H1 (cell line): ENCODE measurements at regions of chr15 and their contacts with region 1.

Region 1: DNA sequence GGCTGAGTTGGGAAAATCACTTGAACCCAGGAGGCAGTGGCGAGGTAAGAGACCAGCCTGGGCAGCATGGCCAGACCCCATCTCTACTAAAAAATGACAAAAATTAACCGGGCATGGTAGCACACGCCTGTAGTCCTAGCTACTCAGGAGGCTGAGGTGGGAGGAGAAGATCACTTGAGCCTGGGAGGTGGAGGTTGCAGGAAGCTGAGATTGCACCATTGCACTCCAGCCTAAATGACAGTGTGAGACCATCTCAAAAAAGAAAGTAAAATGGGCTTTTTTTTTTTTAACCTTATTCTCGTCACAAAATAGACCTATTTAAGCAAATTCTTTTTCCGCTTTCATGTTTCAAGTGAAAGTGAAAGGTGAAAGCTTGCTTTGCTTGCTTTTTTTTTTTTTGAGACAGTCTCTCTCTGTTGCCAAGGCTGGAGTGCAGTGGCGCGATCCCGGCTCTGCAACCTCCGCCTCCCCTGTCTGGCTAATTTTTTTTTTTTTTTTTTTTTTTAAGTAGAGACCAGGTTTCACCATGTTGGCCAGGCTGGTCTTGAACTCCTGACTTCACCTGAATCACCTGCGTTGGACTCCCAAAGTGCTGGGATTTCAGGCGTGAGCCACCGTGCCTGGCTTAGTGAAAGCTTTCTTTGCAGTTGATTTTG is 3.6 kb downstream of the PDIA3 start:
- DNase-seq: no peak
- H3K4me3 ChIP-seq: no peak overlapping the region
- H3K27ac ChIP-seq: no peak overlapping the region
- H3K4me1 ChIP-seq: peaks cover 0 to 6% (median 2%) of the 10 kb centered on the region in 4 experiments; a peak in 6 of 7 replicates
- H3K27me3 ChIP-seq: no peaks in the 10 kb centered on the region
- CTCF ChIP-seq: no peak
- EP300 ChIP-seq: no peak
- POLR2A ChIP-seq: no peak
- RAD21 ChIP-seq: no peak

Region 2: DNA sequence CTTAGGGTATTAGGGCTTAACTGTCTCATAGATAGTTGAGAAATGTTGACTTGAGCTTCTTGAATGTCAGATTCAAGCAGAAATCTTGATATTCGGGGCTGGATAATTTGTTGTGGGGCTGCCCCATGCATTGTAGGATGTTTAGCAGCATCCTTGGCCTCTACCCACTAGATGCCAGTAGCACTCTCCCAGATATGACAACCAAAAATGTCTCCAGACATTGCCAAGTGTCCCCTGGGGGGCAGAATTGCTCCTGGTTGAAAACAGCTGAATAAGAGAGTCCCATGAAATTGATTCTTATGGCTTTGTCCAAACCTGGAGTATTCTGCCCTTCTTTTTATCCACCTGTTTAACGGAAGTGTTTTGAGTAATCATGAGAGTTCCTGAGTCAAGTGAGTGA is 403.5 kb before region 1 on chr15:
- CTCF ChIA-PET with region 1: no interaction called
- POLR2A ChIA-PET with region 1: no interaction called
- DNase-seq: no peak
- H3K4me3 ChIP-seq: no peak overlapping the region
- H3K27ac ChIP-seq: no peak overlapping the region
- H3K4me1 ChIP-seq: no peaks in the 10 kb centered on the region
- H3K27me3 ChIP-seq: no peaks in the 10 kb centered on the region
- CTCF ChIP-seq: no peak
- EP300 ChIP-seq: no peak
- POLR2A ChIP-seq: no peak
- RAD21 ChIP-seq: no peak

Region 3: GRCh38 chr15:43769584-43770228 is 19.9 kb after region 1 on chr15:
- CTCF ChIA-PET with region 1: interaction called, 24 read pairs
- POLR2A ChIA-PET with region 1: interaction called, 4 read pairs
- DNase-seq: peak; percentile 34 to 79
- H3K4me3 ChIP-seq: no peak overlapping the region
- H3K27ac ChIP-seq: no peak overlapping the region
- H3K4me1 ChIP-seq: no peaks in the 10 kb centered on the region
- H3K27me3 ChIP-seq: no peaks in the 10 kb centered on the region
- CTCF ChIP-seq: peak; percentile 19 to 85 (median 55)
- EP300 ChIP-seq: no peak
- POLR2A ChIP-seq: no peak
- RAD21 ChIP-seq: peak; percentile 38 to 53; a peak in 3 of 4 replicates

Region 4: DNA sequence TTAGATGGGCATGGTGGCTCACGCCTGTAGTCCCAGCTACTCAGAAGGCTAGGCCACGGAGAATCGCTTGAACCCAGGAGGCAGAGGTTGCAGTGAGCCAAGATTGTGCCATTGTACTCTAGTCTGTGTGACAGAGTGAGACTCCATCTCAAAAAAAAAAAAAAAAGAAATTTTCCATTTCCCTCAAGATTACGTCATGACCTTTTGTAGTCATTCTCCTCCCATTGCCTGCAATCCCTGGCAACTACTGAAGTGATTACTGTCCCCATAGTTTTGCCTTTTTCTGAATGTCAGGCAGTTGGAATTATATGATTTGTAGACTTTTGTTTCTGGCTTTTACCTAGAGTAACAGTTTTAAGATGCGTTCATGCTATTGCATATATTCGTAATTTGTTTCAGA is 105.0 kb after region 1 on chr15:
- CTCF ChIA-PET with region 1: no interaction called
- POLR2A ChIA-PET with region 1: no interaction called
- DNase-seq: no peak
- H3K4me3 ChIP-seq: no peak overlapping the region
- H3K27ac ChIP-seq: no peak overlapping the region
- H3K4me1 ChIP-seq: no peaks in the 10 kb centered on the region
- H3K27me3 ChIP-seq: no peaks in the 10 kb centered on the region
- CTCF ChIP-seq: no peak
- EP300 ChIP-seq: no peak
- POLR2A ChIP-seq: no peak
- RAD21 ChIP-seq: no peak

Region 5: DNA sequence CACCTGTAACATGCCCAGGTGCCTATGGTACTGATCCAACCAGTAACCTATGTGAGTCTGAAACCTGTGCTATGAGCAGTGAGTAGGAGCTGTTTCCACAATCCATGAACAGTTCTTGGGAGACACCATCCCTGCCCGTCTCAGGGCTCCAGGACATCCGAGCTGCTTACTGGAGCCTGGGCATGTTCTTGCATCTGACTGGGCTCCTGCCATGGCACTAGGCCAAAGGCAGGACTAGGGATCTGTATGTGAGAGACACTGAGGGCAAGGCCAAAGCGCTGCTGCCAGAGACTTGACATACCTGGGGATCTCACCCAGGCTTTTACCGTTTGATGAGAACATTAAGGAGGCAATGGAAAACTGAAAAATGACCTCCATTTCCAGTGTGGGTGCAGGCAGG is 136.7 kb after region 1 on chr15:
- CTCF ChIA-PET with region 1: no interaction called
- POLR2A ChIA-PET with region 1: no interaction called
- DNase-seq: no peak
- H3K4me3 ChIP-seq: no peak overlapping the region
- H3K27ac ChIP-seq: no peak overlapping the region
- H3K4me1 ChIP-seq: peaks cover 0 to 2% (median under 1%) of the 10 kb centered on the region in 4 experiments; a peak in 3 of 7 replicates
- H3K27me3 ChIP-seq: no peaks in the 10 kb centered on the region
- CTCF ChIP-seq: no peak
- EP300 ChIP-seq: no peak
- POLR2A ChIP-seq: no peak
- RAD21 ChIP-seq: no peak

Region 6: DNA sequence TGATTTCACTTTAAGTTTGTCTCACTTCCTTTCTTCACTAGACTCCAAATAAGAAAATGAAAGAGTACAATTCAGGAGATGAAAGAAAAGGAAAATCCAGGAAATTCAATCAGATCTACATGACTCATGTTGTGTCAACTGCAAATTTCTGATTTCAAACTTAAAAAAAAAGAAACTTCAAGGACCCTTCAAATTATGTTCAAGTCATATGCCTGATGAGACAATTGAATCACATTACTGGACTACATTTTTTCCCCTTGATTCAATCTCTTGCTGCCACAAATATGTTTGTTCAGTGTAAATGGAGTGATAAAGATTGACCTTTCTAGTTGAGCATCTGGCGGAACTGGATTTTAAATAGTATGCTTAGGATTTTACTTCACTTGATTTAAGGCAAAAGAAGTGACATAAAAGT is 407.9 kb after region 1 on chr15:
- CTCF ChIA-PET with region 1: no interaction called
- POLR2A ChIA-PET with region 1: no interaction called
- DNase-seq: no peak
- H3K4me3 ChIP-seq: no peak overlapping the region
- H3K27ac ChIP-seq: no peak overlapping the region
- H3K4me1 ChIP-seq: 0 out of 7 replicates have a peak, but pooled peaks cover 0 to 2% (median 0%) of the 10 kb centered on the region in 4 experiments
- H3K27me3 ChIP-seq: no peaks in the 10 kb centered on the region
- CTCF ChIP-seq: no peak
- EP300 ChIP-seq: no peak
- POLR2A ChIP-seq: no peak
- RAD21 ChIP-seq: no peak